Activated CD8-positive, alpha-beta T cell treated with anti-CD3 and anti-CD28 coated beads, Interleukin-2, amount 10 ng/mL, durations not matched to agents 7 days and 5 days (primary cell): ENCODE measurements at regions of chr19 and their contacts with region 1.

Region 1: GRCh38 chr19:13155472-13156359 is 5.5 kb downstream of the IER2 start:
- DNase-seq: peak; percentile 86
- ATAC-seq: peak; percentile 10
- H3K4me3 Mint-ChIP-seq: peak overlapping the region; percentile 99
- H3K27ac Mint-ChIP-seq: peak overlapping the region; percentile 94
- H3K4me1 Mint-ChIP-seq: peaks cover 50% of the 10 kb centered on the region
- H3K27me3 Mint-ChIP-seq: peaks cover 2% of the 10 kb centered on the region

Region 2: DNA sequence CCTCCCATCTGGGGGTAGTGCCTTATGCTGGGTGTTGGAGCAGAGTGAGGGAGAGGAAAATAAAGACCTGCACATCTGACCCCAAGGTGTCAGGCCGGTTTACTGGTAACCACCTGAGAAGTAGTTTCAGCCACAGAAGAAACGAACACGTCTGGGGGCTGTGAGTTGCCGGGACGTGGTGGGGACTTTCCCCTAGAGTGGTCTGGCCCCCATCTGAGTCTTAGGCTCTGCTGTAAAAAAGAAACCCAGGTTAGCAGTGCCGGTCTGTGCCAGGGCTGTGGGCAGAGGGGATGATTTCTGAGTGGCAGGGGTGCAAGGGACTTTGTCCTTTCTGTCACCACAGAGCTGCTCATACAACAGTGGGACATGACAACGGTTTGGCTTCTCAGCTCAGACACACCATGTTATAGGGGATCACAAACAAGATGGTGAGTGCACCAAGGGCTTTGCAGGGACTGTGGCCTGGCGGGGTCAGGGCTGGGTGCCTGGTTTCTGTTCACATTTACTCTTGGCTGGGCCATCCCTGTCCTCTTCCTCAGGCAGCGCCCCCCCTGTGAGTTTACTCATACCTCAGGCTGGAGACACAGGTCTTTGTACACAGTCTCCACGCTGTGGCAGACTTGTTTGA is 255.7 kb before region 1 on chr19:
- CTCF ChIA-PET with region 1: no interaction called
- POLR2A ChIA-PET with region 1: no interaction called
- DNase-seq: peak; percentile 41
- ATAC-seq: peak; percentile 72
- H3K4me3 Mint-ChIP-seq: no peak overlapping the region
- H3K27ac Mint-ChIP-seq: peak overlapping the region; percentile 64
- H3K4me1 Mint-ChIP-seq: peaks cover 22% of the 10 kb centered on the region
- H3K27me3 Mint-ChIP-seq: no peaks in the 10 kb centered on the region

Region 3: GRCh38 chr19:13117772-13118423 is 37.8 kb before region 1 on chr19 and contains the start of gene NACC1:
- CTCF ChIA-PET with region 1: interaction called, 5 read pairs
- POLR2A ChIA-PET with region 1: interaction called, 64 read pairs
- DNase-seq: peak; percentile 91
- ATAC-seq: peak; percentile 85
- H3K4me3 Mint-ChIP-seq: peak within 1 kb of the TSS; percentile 97
- H3K27ac Mint-ChIP-seq: peak within 1 kb of the TSS; percentile 96
- H3K4me1 Mint-ChIP-seq: peaks cover 53% of the 10 kb centered on the region
- H3K27me3 Mint-ChIP-seq: no peaks in the 10 kb centered on the region
- total RNA-seq, gene NACC1: 74.6 to 84.8 TPM

Region 4: DNA sequence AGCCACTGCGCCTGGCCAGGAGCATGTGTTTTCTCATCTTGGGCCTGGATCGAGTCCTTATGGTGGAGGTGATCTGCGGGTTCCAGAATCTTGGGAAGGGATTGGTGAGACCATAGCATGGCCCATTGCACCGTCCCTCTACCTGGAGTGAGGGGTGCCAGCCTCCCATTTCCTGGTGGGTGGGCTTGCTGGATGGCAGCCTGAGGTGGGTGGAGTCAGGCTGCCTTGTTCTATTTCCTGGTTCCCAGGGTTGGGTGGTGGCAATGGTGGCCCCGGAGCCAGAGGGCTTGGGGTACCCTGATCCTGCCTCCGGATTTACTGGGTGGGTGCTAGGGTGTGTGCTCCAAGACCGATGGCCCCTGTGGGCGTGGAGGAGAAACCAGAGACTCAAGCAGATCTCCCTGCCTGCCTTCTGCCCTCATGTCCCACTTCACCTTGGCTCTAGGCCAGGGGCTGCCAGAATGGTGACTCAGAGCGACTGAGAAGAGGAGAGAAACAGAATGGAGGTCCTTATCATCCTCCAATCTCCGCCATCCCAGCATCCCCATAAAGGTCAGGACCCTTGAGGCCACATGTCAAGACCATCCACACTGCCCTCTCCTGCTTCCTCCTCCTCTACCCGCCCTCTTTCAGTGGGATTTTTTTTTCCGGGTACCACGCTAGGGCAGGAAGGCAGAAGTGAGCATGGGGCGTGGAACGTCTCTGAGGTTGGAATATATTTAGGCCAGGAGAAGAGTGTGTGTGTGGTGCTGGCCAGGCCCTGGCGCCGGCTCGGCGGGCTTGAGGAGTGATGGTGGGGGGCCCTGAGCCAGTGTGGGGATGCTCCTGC is 16.6 kb after region 1 on chr19:
- CTCF ChIA-PET with region 1: interaction called, 16 read pairs
- POLR2A ChIA-PET with region 1: interaction called, 183 read pairs
- DNase-seq: peak; percentile 73
- ATAC-seq: peak; percentile 14
- H3K4me3 Mint-ChIP-seq: peak overlapping the region; percentile 82
- H3K27ac Mint-ChIP-seq: peak overlapping the region; percentile 97
- H3K4me1 Mint-ChIP-seq: peaks cover 69% of the 10 kb centered on the region
- H3K27me3 Mint-ChIP-seq: no peaks in the 10 kb centered on the region

Region 5: DNA sequence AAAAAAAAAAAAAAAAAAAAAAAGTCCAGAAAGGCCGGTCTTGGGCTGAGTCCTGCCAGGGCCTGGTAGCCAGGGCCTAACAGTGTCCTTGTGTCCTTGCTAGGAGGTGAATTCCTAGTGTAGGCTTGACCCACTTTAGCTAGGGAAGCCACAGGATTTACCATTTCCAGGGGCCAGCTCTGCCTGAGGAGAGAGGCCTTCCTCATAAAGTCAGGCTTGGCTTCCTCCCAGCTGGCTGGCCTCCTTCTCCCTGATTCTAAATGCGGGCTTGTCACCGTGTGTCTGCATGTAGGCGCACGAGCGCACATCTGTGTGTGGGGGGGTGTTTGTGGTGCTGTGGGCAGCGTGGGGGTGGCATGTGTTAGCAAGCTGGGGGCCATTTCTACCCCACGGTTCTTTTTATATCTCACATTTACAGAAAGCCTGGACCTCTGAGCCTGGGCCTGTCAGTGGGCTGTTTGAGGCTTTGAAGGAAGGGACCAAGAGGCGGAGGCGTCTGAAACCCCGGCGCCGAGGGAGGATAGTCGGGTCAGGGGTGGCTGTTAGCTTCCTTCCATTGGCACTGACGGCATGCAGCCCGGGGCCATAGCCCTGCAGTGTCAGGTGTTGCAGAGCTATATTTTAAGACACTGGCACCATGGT is 26.2 kb after region 1 on chr19:
- CTCF ChIA-PET with region 1: interaction called, 8 read pairs
- POLR2A ChIA-PET with region 1: interaction called, 19 read pairs
- DNase-seq: peak; percentile 41
- ATAC-seq: peak; percentile 42
- H3K4me3 Mint-ChIP-seq: no peak overlapping the region
- H3K27ac Mint-ChIP-seq: peak overlapping the region; percentile 79
- H3K4me1 Mint-ChIP-seq: peaks cover 30% of the 10 kb centered on the region
- H3K27me3 Mint-ChIP-seq: no peaks in the 10 kb centered on the region

Region 6: DNA sequence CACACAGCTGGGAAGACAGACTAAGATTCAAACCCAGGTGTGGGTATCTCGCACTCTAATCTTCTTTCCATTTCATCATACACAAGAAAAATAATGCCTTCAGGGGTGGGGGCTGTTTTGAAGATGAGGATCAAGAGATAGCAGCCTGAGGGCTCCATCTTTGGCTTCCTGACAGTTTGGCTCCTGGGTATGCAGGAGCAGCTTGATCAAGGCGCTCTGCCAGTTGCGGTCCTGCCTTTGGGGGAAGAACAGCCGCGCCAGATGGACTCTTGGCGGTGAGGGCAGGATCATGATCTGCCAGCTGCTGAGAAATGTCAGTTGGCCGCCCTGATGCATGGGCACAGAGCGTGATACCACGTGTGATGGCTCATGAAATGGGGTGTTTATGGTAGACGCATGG is 113.6 kb after region 1 on chr19:
- CTCF ChIA-PET with region 1: no interaction called
- POLR2A ChIA-PET with region 1: no interaction called
- DNase-seq: no peak
- ATAC-seq: no peak
- H3K4me3 Mint-ChIP-seq: no peak overlapping the region
- H3K27ac Mint-ChIP-seq: no peak overlapping the region
- H3K4me1 Mint-ChIP-seq: peaks cover 3% of the 10 kb centered on the region
- H3K27me3 Mint-ChIP-seq: peaks cover 2% of the 10 kb centered on the region

Region 7: GRCh38 chr19:13430790-13431582 is 275.3 kb after region 1 on chr19:
- CTCF ChIA-PET with region 1: no interaction called
- POLR2A ChIA-PET with region 1: no interaction called
- DNase-seq: peak; percentile 64
- ATAC-seq: no peak
- H3K4me3 Mint-ChIP-seq: no peak overlapping the region
- H3K27ac Mint-ChIP-seq: no peak overlapping the region
- H3K4me1 Mint-ChIP-seq: no peaks in the 10 kb centered on the region
- H3K27me3 Mint-ChIP-seq: peaks cover 9% of the 10 kb centered on the region